HAP-1 (cell line): ENCODE measurements at regions of chr1 and their contacts with region 1.

Region 1: GRCh38 chr1:214123061-214123784 is 135.4 kb downstream of the PROX1 start:
- DNase-seq: peak; percentile 53 to 68
- H3K4me3 ChIP-seq: no peak overlapping the region
- H3K4me1 ChIP-seq: no peaks in the 10 kb centered on the region
- H3K27me3 ChIP-seq: no peaks in the 10 kb centered on the region

Region 2: DNA sequence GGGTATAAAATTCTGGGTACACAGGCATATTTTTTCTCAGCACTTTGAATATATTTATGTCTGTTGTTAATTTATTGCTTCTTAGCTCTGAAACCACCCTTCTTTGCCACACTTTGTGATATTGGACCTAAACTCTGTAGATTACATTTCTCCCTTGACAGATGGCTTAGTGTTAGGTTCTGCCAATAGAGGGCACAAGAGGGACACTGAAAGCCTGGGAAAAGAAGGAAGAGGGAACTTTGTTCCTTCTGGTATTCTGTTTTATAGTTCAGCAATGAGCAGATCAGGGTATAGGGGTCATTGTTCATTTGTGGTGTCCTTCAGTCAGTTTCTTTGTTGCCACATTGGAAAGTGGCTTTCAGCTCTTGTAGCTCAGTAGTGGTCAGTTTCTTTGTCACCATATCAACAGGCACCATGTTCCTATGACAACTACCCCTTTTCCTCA is 559.0 kb before region 1 on chr1:
- in situ Hi-C with region 1: loop called (anchors 25 kb)
- DNase-seq: peak; percentile 29 to 55
- H3K4me3 ChIP-seq: no peak overlapping the region
- H3K4me1 ChIP-seq: no peaks in the 10 kb centered on the region
- H3K27me3 ChIP-seq: no peaks in the 10 kb centered on the region

Region 3: DNA sequence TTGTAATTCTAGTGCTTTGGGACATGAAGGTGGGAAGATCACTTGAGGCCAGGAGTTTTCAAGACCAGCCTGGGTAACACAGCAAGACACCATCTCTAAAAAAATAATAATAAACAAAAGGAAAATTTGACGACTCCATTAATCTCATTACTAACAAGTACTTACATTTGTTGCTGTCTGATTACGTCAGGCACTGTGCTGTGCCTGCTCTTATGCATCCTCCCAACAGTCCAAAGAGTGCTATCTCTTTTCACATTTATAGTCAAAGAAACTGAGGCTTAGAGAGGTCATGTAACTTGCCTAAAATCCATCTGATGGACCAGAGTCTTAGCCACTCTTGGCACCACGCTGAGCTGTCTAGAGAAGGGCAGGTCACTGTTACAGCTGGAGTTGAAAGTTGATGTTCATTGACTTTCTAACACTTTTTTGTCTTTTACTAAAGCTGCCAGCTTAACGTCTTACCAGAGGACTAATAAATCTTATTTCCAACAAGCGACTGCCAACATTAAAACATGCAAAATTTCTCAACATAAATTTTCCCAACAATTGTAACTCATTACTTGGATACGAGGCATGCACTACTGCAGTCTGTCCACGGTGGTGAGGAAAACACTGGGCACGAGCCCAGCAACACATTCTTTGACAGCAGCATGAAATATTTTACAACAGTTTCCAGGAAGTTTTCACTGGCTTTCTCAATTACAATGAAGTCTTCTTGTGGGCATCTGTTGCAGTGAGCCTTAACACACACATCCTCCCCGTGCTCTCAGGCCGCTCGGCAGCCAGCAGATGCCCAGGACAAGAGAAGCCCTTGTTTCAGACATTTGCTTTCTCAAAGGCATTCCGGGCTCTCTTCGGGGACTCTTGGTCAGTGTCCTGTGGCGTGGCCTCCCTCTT is 398.3 kb before region 1 on chr1:
- in situ Hi-C with region 1: no loop called
- DNase-seq: no peak
- H3K4me3 ChIP-seq: no peak overlapping the region
- H3K4me1 ChIP-seq: no peaks in the 10 kb centered on the region
- H3K27me3 ChIP-seq: no peaks in the 10 kb centered on the region